Mammary epithelial cell (primary cell): ENCODE measurements at regions of chr4 and their contacts with region 1.

Region 1: DNA sequence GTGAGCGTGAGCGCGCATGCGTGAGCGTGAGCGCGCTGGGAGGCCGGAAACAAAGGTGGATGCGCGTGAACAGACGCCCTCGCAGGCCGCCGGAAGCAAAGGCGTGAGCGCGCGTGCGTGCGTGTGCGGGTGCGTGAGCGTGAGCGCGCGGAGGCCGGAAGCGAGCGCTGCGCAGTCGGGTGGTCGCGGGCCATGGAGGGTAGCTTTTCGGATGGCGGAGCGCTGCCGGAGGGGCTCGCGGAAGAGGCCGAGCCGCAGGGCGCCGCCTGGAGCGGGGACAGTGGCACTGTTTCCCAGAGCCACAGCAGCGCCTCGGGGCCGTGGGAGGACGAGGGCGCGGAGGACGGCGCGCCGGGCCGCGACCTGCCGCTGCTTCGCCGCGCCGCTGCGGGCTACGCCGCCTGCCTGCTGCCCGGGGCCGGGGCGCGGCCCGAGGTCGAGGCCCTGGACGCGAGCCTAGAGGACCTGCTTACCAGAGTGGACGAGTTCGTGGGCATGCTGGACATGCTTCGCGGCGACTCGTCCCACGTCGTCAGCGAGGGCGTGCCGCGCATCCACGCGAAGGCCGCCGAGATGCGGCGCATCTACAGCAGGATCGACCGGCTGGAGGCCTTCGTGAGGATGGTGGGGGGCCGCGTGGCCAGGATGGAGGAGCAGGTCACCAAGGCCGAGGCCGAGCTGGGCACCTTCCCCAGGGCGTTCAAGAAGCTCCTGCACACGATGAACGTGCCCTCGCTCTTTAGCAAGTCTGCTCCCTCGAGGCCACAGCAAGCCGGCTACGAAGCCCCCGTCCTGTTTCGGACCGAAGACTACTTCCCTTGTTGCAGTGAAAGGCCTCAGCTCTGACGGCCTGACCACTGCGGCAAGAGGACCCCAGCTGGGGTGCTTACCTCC is at the start of gene BLOC1S4:
- DNase-seq: peak; percentile 85
- H3K4me3 ChIP-seq: peak within 1 kb of the TSS; percentile 48 to 95 (median 90)
- H3K27ac ChIP-seq: peak within 1 kb of the TSS; percentile 55
- H3K4me1 ChIP-seq: peaks cover 4% of the 10 kb centered on the region
- H3K27me3 ChIP-seq: no peaks in the 10 kb centered on the region
- CTCF ChIP-seq: peak in 1 of 2 donors; percentile 29
- total RNA-seq, gene BLOC1S4: 14.1 to 15.3 TPM

Region 2: GRCh38 chr4:6673660-6674499 is 42.4 kb before region 1 on chr4:
- CTCF ChIA-PET with region 1: no interaction called
- dilution Hi-C with region 1: no loop called
- in situ Hi-C with region 1: no loop called
- intact Hi-C with region 1: loop called (anchors 1 kb)
- DNase-seq: peak; percentile 88
- H3K4me3 ChIP-seq: peak overlapping the region; percentile 62 to 72 (median 65)
- H3K27ac ChIP-seq: peak overlapping the region; percentile 31
- H3K4me1 ChIP-seq: peaks cover 26% of the 10 kb centered on the region
- H3K27me3 ChIP-seq: no peaks in the 10 kb centered on the region
- CTCF ChIP-seq: no peak

Region 3: DNA sequence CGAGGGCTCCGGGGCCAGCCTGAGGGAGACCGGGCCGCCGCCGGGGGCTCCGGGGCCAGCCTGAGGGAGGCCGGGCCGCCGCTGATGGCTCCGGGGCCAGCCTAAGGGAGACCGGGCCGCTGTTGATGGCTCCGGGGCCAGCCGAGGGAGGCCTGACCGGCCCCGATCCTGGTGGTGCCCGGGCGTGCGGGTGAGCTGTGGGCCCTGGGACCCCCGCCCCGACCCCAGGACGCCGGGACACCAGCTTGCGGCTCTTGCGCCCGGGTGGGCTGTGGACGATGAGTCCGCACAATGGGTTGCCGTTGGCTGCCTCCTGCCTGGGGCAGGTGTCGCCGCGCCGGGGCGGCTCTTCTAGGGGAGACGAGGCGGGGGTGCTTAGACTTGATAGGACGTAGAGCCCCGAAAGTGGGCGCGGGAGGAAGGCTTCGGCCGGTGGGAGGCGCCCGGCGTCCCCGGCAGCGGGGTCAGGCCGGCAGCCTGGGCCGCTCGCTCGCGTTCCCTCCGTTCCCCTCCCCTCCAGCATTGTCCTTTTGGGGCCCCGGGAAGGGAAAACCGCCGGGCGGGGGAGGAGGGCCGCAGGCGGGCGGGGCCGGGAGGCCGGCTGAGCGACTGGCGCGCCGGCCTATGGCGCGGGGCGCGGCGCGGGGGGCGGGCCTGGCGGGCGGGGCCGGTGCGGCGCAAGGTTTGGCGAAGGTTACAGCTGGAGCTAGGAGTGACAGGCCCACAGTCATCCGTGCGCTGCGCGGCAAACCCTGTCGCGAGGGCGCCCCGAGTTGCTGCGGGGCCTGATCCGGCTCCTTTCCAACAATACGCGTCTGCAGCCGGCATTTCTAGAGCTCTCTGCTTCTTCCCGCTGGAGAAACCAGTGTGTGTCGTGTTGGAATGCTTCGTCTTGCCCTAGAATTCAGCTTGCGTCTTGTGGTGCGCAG is 67.1 kb after region 1 on chr4:
- CTCF ChIA-PET with region 1: no interaction called
- dilution Hi-C with region 1: no loop called
- in situ Hi-C with region 1: no loop called
- intact Hi-C with region 1: loop called (anchors 1 kb)
- DNase-seq: peak; percentile 82
- H3K4me3 ChIP-seq: peak overlapping the region; percentile 85 to 91 (median 86)
- H3K27ac ChIP-seq: peak overlapping the region; percentile 65
- H3K4me1 ChIP-seq: peaks cover 3% of the 10 kb centered on the region
- H3K27me3 ChIP-seq: no peaks in the 10 kb centered on the region
- CTCF ChIP-seq: peak in 1 of 2 donors; percentile 27

Region 4: GRCh38 chr4:6885951-6886557 is 169.8 kb after region 1 on chr4:
- CTCF ChIA-PET with region 1: no interaction called
- dilution Hi-C with region 1: no loop called
- in situ Hi-C with region 1: no loop called
- intact Hi-C with region 1: loop called (anchors 1 kb)
- DNase-seq: peak; percentile 46
- H3K4me3 ChIP-seq: no peak overlapping the region
- H3K27ac ChIP-seq: no peak overlapping the region
- H3K4me1 ChIP-seq: peaks cover 10% of the 10 kb centered on the region
- H3K27me3 ChIP-seq: no peaks in the 10 kb centered on the region
- CTCF ChIP-seq: peak; percentile 36 to 56

Region 5: DNA sequence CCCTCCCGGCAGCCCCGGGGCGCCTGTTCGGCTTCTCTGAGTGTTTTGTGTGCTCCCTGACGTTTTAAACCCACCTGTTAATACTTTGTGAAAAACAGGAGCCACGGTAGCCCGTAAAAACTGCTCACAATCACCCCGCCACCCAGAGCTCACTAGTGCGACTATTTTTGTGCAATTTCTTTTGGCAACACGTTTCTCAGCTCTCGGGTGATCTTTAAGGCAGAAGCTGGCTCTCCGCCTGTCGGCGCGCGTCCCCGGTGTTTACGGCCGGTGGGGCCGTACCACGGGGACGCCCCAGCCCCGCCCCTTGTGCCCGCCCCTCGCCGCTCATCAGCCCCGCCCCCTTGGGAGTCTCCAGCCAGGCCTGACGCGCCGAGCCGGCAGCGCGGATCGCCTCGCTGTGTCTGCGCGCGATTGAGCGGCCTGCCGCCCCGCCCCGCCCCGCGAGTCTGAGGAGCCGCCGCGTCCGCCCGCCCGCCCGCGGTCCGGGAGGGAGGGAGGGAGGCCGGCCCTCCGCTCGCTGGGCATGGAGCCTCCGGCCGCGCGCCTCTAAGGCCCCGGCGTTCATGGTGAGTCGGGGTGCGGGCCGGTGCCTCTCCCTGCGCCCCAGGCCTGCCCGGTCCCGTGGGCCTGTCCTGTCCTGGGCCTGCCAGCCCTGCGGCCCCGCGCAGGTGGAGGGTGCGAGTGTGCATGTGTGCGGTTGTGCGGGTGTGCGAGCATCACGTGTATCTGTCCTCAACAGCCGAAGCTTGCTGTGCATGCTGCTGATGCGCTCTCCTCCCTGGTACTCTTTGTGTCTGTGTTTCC is 270.7 kb after region 1 on chr4:
- CTCF ChIA-PET with region 1: no interaction called
- dilution Hi-C with region 1: no loop called
- in situ Hi-C with region 1: no loop called
- intact Hi-C with region 1: loop called (anchors 5 kb)
- DNase-seq: peak; percentile 93
- H3K4me3 ChIP-seq: peak overlapping the region; percentile 82 to 95 (median 95)
- H3K27ac ChIP-seq: peak overlapping the region; percentile 90
- H3K4me1 ChIP-seq: peaks cover 42% of the 10 kb centered on the region
- H3K27me3 ChIP-seq: no peaks in the 10 kb centered on the region
- CTCF ChIP-seq: peak in 1 of 2 donors; percentile 36